Posterior vena cava (tissue), 2 donors: ENCODE measurements at regions of chr13 and their contacts with region 1.

Region 1: DNA sequence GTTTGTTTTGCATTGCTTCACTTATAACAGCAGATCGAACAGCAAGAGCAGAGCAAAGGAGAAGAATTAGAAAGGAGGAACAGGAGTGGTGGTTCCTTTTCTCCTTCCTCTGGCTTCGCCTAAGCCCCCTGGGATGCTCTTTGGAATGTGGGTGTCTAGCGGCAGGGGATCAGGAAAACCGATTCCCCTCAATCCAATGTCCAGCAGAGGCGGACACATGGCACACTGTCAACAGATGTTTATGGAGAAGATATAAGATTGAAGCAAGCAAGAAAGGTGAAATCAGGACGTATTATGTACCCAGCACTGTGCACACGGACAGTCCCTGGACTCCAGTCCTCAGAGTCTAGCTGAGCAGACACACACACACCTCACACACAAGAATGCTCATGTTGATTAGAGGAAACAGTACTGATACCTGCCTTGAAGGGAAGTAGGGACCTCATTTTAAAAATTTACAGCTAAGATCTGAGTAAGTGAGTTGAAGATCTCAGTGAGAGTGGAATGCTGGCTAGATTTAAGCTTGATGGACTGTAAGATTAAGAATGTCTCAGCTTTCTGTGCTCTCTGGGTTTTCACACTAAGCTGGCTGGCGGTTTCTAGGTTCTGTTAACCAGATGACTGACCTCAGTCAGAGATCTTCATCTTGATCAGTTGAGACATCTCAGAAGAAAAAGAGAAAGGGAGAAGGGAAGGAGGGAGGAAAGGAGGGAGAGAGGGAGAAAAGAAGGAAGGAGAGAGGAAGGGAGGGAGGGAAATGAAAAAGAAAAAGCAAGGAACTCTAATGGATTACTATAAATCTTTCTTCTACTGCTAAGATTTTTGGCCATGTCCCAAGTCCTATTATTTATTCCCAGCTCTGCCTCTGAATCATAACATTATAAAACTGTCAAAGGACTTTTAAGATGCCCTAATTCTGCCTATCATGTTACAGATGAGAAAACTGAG is 44.8 kb downstream of the FLT1 start:
- DNase-seq: no peak

Region 2: DNA sequence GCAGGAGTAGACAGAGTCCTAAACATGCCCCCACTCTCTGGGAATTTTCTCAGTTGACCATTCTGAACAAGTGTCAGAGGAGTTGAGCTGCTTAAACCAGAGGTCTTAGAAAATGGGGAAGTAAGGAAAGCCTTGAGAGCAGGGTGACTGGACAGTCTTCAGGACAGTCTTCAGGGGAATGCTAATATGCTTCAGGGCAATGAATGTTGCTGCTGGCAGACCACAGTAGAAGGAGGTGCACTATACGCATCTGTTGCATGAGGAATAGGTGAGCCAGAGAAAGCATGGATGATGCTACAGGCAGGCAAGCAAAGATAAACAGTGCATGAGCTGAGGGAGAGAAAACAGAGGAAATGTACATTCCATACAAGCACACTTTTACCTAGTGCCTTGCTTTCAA is 1492.9 kb before region 1 on chr13:
- intact Hi-C with region 1: loop called in 1 of 2 experiments (anchors 5 kb)
- DNase-seq: no peak